ENCODE measurements at regions of chr1 and their contacts with region 1.

Region 1: GRCh38 chr1:185681034-185681633 is 53.1 kb upstream of the HMCN1 start:
- DNase-seq: no peak
- H3K4me3 ChIP-seq: no peak overlapping the region
- CTCF ChIP-seq: peak; percentile 49

Region 2: DNA sequence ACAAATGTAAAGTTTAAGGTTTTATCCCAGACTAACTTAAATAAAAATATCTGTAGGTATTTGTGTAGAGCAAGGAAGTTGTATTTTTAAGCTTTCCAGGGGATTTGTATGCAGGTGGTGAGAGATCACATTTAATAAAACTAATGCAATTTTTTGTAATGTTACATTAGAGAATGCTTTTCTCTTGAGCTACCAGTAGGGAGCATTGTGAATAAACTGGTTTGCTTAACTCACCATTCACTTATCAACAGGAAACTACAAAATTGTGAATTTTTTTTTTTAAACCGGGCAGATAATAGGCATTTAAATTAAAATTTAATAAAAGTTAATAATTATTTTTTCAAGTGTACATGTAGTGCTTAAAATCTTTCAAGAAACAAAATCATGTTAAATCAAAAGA is 442.7 kb before region 1 on chr1:
- CTCF ChIA-PET with region 1: interaction called, 26 read pairs
- POLR2A ChIA-PET with region 1: no interaction called
- DNase-seq: no peak
- H3K4me3 ChIP-seq: no peak overlapping the region
- CTCF ChIP-seq: peak; percentile 26

Region 3: GRCh38 chr1:185559684-185560331 is 121.3 kb before region 1 on chr1:
- CTCF ChIA-PET with region 1: interaction called, 17 read pairs
- POLR2A ChIA-PET with region 1: no interaction called
- DNase-seq: no peak
- H3K4me3 ChIP-seq: no peak overlapping the region
- CTCF ChIP-seq: peak; percentile 58

Region 4: DNA sequence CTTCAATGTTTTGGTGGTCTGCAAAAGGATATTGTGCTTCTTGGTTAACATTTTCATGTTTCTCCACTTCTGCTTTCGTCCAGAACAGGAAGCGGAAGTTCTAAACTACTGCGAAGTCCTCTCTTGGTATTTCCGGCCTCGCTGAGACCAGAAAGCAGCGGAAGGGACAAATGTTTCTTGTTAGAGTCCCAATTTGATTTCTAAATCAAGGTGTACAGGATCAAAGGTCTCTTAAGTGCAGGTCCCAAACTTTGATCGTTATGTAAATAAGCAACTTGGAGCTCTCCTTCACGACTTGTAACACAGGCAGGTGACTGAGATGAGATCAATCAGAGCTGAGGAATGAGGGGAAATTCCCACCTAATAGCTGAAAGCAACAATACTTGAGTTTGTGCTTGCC is 12.9 kb after region 1 on chr1:
- CTCF ChIA-PET with region 1: interaction called, 20 read pairs
- POLR2A ChIA-PET with region 1: no interaction called
- DNase-seq: no peak
- H3K4me3 ChIP-seq: no peak overlapping the region
- CTCF ChIP-seq: no peak

Measured in AG04449 (cell line).